Activated CD4-positive, alpha-beta T cell treated with anti-CD3 and anti-CD28 coated beads for 36 hours (primary cell): ENCODE measurements at regions of chrX and their contacts with region 1.

Region 1: GRCh38 chrX:13087322-13088155 is 43.1 kb upstream of the FAM9C start:
- DNase-seq: peak; percentile 69
- ATAC-seq: peak; percentile 66
- H3K4me3 Mint-ChIP-seq: peak overlapping the region; percentile 69
- H3K27ac Mint-ChIP-seq: peak overlapping the region; percentile 92
- H3K4me1 Mint-ChIP-seq: peaks cover 88% of the 10 kb centered on the region
- H3K27me3 Mint-ChIP-seq: no peaks in the 10 kb centered on the region

Region 2: DNA sequence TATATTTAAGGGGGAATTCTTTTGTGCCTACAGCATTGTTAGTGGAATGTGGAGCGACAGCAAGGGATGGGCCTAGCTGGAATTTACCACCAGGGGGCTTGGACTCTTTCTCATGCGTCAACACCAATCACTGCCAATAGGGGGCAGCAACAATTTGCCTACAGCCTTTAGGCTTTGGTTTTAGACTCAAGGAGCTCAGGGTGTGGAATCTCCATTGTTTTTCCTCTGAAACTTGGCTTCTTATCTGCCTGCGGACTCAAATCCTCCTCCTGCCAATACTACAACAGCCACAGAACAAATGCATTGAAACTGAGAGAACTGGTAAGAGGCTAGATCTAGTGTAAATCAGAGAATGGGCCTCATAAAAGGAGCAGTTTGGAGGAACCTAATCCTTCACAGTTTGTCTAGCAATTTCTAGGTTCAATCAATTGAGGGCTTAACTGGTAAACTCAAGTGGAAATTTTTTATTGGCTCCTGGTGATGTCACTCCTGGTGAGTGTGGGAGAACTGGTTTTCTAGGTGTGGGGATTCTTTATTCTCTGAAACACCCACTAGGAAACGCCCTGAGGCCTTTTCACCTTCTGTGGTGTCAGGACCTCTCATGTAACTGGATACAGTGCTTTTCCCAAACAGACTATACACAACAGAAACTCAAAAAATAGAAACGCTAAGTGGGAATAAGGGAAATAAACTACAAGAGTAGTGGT is 140.5 kb before region 1 on chrX:
- CTCF ChIA-PET with region 1: interaction called, 28 read pairs
- POLR2A ChIA-PET with region 1: interaction called, 11 read pairs
- intact Hi-C with region 1: loop called (anchors 1 to 2 kb)
- DNase-seq: peak; percentile 81
- ATAC-seq: peak; percentile 11
- H3K4me3 Mint-ChIP-seq: peak overlapping the region; percentile 38
- H3K27ac Mint-ChIP-seq: peak overlapping the region; percentile 94
- H3K4me1 Mint-ChIP-seq: peaks cover 54% of the 10 kb centered on the region
- H3K27me3 Mint-ChIP-seq: no peaks in the 10 kb centered on the region

Region 3: DNA sequence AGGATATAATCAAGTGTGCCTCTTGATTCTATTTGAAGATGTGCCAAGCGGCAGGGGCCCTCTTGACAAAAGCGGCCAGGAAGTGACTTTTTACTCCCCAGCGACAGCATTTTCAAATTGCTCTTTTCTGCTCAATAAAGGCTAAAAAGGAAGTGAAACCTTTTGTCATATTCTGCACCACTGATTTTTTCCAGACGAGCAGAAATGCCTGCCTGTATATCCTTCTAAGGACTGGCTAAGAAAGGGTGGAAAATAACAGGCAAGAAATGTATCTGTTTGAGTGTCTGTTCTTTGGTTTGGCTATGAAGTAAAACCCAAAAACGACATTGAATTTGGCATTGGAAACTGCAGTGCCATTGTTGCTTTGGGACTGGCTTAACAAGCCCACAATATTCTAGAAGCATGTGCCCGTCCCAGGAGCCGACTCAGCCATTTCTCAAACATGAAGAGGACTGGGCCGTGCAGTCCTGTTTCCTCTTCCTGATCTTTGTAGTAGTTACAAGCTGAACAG is 87.2 kb before region 1 on chrX:
- CTCF ChIA-PET with region 1: interaction called, 6 read pairs
- POLR2A ChIA-PET with region 1: interaction called, 5 read pairs
- intact Hi-C with region 1: loop called (anchors 1 kb)
- DNase-seq: peak; percentile 61
- ATAC-seq: peak; percentile 38
- H3K4me3 Mint-ChIP-seq: peak overlapping the region; percentile 66
- H3K27ac Mint-ChIP-seq: peak overlapping the region; percentile 94
- H3K4me1 Mint-ChIP-seq: peaks cover 70% of the 10 kb centered on the region
- H3K27me3 Mint-ChIP-seq: no peaks in the 10 kb centered on the region

Region 4: GRCh38 chrX:13167481-13168231 is 80.1 kb after region 1 on chrX:
- CTCF ChIA-PET with region 1: no interaction called
- POLR2A ChIA-PET with region 1: interaction called, 4 read pairs
- intact Hi-C with region 1: loop called (anchors 2 to 5 kb)
- DNase-seq: peak; percentile 35
- ATAC-seq: peak; percentile 72
- H3K4me3 Mint-ChIP-seq: peak overlapping the region; percentile 34
- H3K27ac Mint-ChIP-seq: peak overlapping the region; percentile 60
- H3K4me1 Mint-ChIP-seq: peaks cover 20% of the 10 kb centered on the region
- H3K27me3 Mint-ChIP-seq: no peaks in the 10 kb centered on the region

Region 5: DNA sequence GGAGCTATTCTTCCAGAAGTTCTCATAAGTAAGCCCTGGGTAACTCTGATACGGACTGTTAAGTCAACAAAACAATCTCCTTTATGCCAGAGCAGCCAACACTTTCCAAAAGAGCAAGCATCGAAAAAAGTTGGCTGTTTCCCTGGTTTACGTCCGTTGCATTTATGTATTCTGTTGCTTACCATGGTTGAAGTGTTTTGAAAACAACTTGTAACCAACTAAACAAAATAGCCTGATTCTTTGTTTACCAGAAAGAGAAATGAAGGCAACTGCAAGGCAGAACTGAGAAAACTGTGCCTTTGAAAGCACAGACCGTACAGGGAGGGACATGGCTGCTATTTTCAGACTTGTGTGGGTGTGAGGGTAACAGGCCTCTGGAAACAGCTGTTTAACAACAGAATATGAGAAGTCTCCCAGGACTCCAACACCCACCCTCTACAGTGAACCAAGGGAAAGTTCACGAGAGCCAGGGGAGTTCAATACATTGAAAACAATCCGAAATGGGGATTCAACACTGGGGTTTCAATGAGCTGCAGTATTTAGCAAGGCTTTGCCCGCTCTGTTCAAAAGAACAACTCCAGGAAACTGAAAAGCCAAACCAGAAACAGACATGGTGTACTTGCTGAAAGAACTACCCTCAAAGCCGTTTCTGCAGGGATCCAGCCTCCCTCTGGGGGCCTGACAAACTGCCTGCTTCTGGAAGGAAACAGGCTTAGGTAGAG is 386.1 kb after region 1 on chrX:
- CTCF ChIA-PET with region 1: no interaction called
- POLR2A ChIA-PET with region 1: no interaction called
- intact Hi-C with region 1: loop called in 1 of 2 experiments (anchors 5 kb)
- DNase-seq: peak; percentile 10
- ATAC-seq: peak; percentile 42
- H3K4me3 Mint-ChIP-seq: peak overlapping the region; percentile 52
- H3K27ac Mint-ChIP-seq: peak overlapping the region; percentile 85
- H3K4me1 Mint-ChIP-seq: peaks cover 24% of the 10 kb centered on the region
- H3K27me3 Mint-ChIP-seq: no peaks in the 10 kb centered on the region

Region 6: DNA sequence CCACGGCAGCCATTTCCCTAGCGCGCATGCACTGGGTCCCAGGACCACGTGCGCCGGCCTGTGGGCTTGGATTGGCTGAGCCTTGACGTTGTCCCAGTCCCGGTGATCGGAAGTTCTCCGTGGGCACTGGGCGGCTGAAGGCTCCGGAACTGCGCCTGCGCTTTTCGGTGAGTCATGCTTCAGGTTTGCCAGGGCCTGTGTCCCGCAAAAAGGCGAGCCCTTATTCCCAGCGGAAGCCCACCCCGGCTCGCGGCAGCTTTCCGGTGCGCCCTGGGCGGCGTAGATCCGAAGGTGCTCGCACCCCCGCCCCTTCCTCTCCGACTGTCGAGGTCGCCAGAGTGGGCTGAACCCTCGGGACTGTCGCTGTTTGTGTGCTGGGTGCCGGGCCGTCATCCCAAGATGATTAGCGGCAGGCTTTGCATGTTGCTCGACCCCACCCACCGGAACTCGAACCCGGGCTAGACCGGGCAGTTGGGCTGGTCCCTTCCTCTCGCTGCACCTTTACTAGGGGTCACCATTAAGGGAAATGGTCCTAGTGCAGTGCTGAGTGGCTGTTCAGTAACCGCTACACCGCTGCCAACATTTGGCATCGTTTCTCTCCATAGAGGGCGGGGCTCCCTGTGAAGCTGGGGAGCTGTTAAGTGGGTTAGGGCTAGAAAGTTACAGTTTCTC is 565.6 kb after region 1 on chrX and contains the start of gene TCEANC:
- CTCF ChIA-PET with region 1: no interaction called
- POLR2A ChIA-PET with region 1: no interaction called
- intact Hi-C with region 1: loop called (anchors 5 to 10 kb)
- DNase-seq: peak; percentile 96
- ATAC-seq: peak; percentile 96
- H3K4me3 Mint-ChIP-seq: peak within 1 kb of the TSS; percentile 81
- H3K27ac Mint-ChIP-seq: peak within 1 kb of the TSS; percentile 90
- H3K4me1 Mint-ChIP-seq: peaks cover 12% of the 10 kb centered on the region
- H3K27me3 Mint-ChIP-seq: no peaks in the 10 kb centered on the region
- total RNA-seq, gene TCEANC: 1.9 to 2.3 TPM

Region 7: GRCh38 chrX:14056206-14056605 is 968.7 kb after region 1 on chrX:
- CTCF ChIA-PET with region 1: no interaction called
- POLR2A ChIA-PET with region 1: no interaction called
- intact Hi-C with region 1: no loop called
- DNase-seq: no peak
- ATAC-seq: no peak
- H3K4me3 Mint-ChIP-seq: no peak overlapping the region
- H3K27ac Mint-ChIP-seq: no peak overlapping the region
- H3K4me1 Mint-ChIP-seq: no peaks in the 10 kb centered on the region
- H3K27me3 Mint-ChIP-seq: peaks cover 11% of the 10 kb centered on the region